OCI-LY7 (cell line): ENCODE measurements at regions of chr14 and their contacts with region 1.

Region 1: GRCh38 chr14:74349757-74350156 is 1.5 kb downstream of the VRTN start:
- DNase-seq: no peak
- H3K4me3 ChIP-seq: no peak overlapping the region
- H3K27ac ChIP-seq: no peak overlapping the region
- H3K4me1 ChIP-seq: no peaks in the 10 kb centered on the region
- CTCF ChIP-seq: no peak

Region 2: DNA sequence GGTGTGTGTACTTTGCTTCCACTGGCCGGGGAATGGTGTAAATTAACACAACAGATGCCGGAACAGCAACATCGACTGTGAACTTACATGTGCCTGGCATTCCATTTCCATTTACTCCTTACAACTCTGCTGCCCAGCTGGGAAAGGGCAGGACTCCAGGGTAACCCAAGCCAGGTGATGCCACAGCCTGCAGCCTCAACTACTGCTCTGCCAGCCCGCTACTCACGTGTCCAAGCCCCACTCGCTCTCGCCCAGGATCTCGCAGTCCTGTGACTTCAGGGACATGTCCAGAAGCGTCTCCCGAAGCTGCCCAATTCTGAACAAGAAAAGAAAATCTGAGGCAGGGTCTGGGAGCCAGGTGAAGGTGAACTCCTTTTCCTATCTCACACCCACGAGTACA is 57.7 kb before region 1 on chr14:
- CTCF ChIA-PET with region 1: no interaction called
- POLR2A ChIA-PET with region 1: interaction called, 12 read pairs
- intact Hi-C with region 1: no loop called
- DNase-seq: no peak
- H3K4me3 ChIP-seq: no peak overlapping the region
- H3K27ac ChIP-seq: no peak overlapping the region
- H3K4me1 ChIP-seq: no peaks in the 10 kb centered on the region
- CTCF ChIP-seq: no peak

Region 3: GRCh38 chr14:74302634-74303577 is 46.9 kb before region 1 on chr14 and contains the start of gene ABCD4:
- CTCF ChIA-PET with region 1: no interaction called
- POLR2A ChIA-PET with region 1: no interaction called
- intact Hi-C with region 1: no loop called
- DNase-seq: peak; percentile 94
- H3K4me3 ChIP-seq: peak within 1 kb of the TSS; percentile 86
- H3K27ac ChIP-seq: peak within 1 kb of the TSS; percentile 66
- H3K4me1 ChIP-seq: peaks cover 16% of the 10 kb centered on the region
- CTCF ChIP-seq: peak; percentile 87
- total RNA-seq, gene ABCD4: 39.3 and 46.6 TPM in 2 replicates

Region 4: GRCh38 chr14:74838166-74838565 is 488.4 kb after region 1 on chr14:
- CTCF ChIA-PET with region 1: no interaction called
- POLR2A ChIA-PET with region 1: no interaction called
- intact Hi-C with region 1: loop called (anchors 10 kb)
- DNase-seq: no peak
- H3K4me3 ChIP-seq: no peak overlapping the region
- H3K27ac ChIP-seq: no peak overlapping the region
- H3K4me1 ChIP-seq: peaks cover 35% of the 10 kb centered on the region
- CTCF ChIP-seq: no peak